ENCODE measurements at regions of chr19 and their contacts with region 1.

Region 1: GRCh38 chr19:38402967-38403861 is at the start of gene FAM98C:
- DNase-seq: peak; percentile 46
- H3K4me3 ChIP-seq: peak within 1 kb of the TSS; percentile 95
- CTCF ChIP-seq: peak; percentile 90

Region 2: DNA sequence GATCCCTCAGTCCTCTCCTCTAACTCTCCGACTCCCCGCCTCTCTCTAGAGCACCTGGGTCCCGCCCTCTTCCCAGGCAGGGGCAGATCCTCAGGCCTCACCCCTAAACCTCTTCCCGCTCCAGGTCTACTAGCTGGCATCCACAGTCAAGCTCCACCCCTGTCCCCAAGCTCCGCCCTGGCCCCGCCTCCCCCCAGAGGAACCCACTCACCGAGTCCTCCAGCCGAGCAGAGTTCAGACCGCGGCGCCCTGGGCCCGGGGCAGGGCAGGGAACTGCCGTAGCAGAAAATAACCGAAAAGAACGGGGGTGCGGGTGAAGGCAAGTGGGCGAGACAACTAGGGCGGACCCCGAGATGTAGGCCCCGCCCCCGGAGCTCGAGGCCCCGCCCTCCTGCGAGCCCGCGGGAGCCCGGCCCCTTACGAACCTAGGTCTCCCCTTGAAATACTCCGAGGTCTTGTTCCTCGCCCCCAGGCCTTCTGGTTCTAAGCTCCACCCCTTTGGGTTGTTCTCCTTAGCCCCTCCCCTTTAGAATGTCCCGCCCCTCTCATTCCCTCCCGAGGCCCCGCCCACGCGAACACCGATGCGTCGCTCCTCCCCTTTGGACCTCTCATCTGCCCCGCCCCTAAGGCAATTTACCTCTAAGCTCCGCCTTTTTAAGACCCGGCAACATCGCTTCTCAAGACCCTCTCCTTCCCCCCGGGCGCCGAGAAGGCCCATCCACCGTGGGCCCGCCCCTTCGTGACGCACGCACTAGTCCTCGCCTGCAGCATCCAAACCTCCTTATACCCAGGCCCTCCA is 15.5 kb before region 1 on chr19 and contains the start of gene GGN:
- CTCF ChIA-PET with region 1: interaction called, 53 read pairs
- POLR2A ChIA-PET with region 1: interaction called, 7 read pairs
- DNase-seq: peak; percentile 75
- H3K4me3 ChIP-seq: peak within 1 kb of the TSS; percentile 75
- CTCF ChIP-seq: no peak

Region 3: GRCh38 chr19:38514812-38515633 is 111.8 kb after region 1 on chr19:
- CTCF ChIA-PET with region 1: interaction called, 10 read pairs
- POLR2A ChIA-PET with region 1: no interaction called
- DNase-seq: no peak
- H3K4me3 ChIP-seq: no peak overlapping the region
- CTCF ChIP-seq: peak; percentile 90

Region 4: GRCh38 chr19:38618590-38619360 is 215.6 kb after region 1 on chr19 and contains the start of gene EIF3K:
- CTCF ChIA-PET with region 1: interaction called, 24 read pairs
- POLR2A ChIA-PET with region 1: interaction called, 4 read pairs
- DNase-seq: peak; percentile 91
- H3K4me3 ChIP-seq: peak within 1 kb of the TSS; percentile 86
- CTCF ChIP-seq: no peak

Region 5: GRCh38 chr19:38891771-38892170 is 488.6 kb after region 1 on chr19:
- CTCF ChIA-PET with region 1: interaction called, 24 read pairs
- POLR2A ChIA-PET with region 1: no interaction called
- DNase-seq: no peak
- H3K4me3 ChIP-seq: no peak overlapping the region
- CTCF ChIP-seq: no peak

Measured in AG04449 (cell line).